ENCODE measurements at regions of chr2 and their contacts with region 1.

Region 1: DNA sequence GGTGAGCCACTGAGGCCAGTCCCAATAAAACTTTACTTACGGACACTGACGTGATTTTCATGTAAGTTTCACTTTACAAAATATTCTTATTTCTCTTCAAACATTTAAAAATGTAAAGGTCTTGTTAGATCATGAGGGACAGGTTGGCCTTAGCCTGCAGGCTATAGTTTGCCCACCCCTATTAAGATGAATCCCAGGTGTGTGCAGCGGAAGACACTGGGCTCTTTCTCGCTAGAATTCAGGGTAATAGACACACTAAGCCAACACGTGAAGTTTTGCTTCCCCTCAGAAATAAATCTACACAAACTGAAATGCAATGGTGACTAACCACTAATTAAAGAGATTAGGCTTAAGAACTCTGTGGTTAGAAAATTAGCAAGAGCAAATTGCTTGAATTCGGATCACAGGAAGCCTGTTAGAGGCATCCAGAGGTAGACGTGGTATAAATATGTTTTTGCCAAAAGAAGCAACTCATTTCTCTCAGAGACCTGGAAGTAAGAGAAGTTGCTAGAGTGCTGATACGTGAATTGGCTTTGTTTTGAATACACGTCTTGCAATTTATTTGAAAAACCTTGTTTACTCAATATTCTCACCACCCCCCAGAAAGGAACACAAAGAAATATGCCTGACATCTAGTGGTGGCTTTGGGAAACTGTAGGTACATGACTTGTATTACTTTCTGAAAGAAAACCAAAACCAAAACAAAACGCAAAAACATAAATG is 151.6 kb downstream of the DTNB start:
- DNase-seq: peak in 7 of 14 experiments; percentile 16 to 87 (median 45)
- ATAC-seq: peak; percentile 100
- H3K4me3 ChIP-seq: peak overlapping the region; percentile 10
- H3K4me3 Mint-ChIP-seq: peak overlapping the region; percentile 3
- H3K27ac ChIP-seq: no peak overlapping the region
- H3K27ac Mint-ChIP-seq: peak overlapping the region; percentile 9
- H3K4me1 ChIP-seq: no peaks in the 10 kb centered on the region
- H3K4me1 Mint-ChIP-seq: peaks cover 7% of the 10 kb centered on the region
- H3K27me3 ChIP-seq: no peaks in the 10 kb centered on the region
- H3K27me3 Mint-ChIP-seq: no peaks in the 10 kb centered on the region
- CTCF ChIP-seq: peak; percentile 80

Region 2: DNA sequence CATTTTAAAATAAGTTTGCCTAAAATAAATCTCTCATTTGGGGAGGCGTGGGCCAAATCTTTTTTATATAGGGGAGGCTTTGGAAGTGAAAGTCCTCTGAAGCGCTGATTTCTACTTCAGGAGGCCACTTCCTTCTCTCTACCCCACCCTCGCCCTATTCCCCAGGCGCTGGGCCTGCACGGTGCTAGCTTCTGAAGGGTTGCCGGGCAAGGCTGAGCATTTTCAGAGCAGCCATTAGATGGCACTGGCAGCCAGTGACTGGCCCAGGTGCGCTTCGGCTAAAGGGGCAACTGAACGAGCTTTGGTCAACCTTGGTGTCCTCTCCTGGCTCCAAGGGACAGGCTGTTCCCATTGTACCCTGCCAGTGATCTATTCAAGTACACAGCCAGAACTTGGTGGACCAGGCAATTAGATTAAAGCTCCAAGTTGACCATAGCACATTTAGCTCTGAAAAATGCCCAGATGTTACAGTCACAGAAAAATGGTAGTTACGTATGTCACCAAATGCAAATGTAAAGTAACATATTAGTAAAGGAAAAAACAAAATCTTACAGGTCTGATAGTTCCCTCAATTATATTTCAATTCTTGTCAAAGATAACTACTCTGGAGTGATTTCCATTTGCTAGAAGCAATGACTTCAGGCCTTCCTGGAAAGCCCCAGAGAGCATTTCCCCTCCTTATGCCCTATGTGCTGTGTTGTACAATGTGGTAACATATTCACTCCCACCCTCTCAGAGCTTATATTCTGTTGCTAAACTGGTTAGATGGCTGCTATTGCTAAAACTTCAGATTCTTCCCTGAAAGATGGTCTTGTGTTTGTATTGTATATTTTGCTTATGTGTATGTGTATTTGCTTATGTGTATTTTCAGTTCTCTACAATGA is 355.6 kb before region 1 on chr2:
- CTCF ChIA-PET with region 1: no interaction called
- POLR2A ChIA-PET with region 1: no interaction called
- intact Hi-C with region 1: loop called in 1 of 2 experiments (anchors 1 kb)
- DNase-seq: peak; percentile 2 to 70 (median 39)
- ATAC-seq: peak; percentile 58
- H3K4me3 ChIP-seq: no peak overlapping the region
- H3K4me3 Mint-ChIP-seq: peak overlapping the region; percentile 60
- H3K27ac ChIP-seq: no peak overlapping the region
- H3K27ac Mint-ChIP-seq: peak overlapping the region; percentile 37
- H3K4me1 ChIP-seq: peaks cover 32% of the 10 kb centered on the region
- H3K4me1 Mint-ChIP-seq: peaks cover 36% of the 10 kb centered on the region
- H3K27me3 ChIP-seq: peaks cover 31 to 37% of the 10 kb centered on the region in 2 experiments
- H3K27me3 Mint-ChIP-seq: peaks cover 49% of the 10 kb centered on the region
- CTCF ChIP-seq: peak; percentile 59

Region 3: GRCh38 chr2:25309402-25309801 is 212.4 kb before region 1 on chr2:
- CTCF ChIA-PET with region 1: no interaction called
- POLR2A ChIA-PET with region 1: no interaction called
- intact Hi-C with region 1: loop called (anchors 1 to 2 kb)
- DNase-seq: peak; percentile 49 to 81 (median 60)
- ATAC-seq: peak; percentile 59
- H3K4me3 ChIP-seq: no peak overlapping the region
- H3K4me3 Mint-ChIP-seq: peak overlapping the region; percentile 25
- H3K27ac ChIP-seq: no peak overlapping the region
- H3K27ac Mint-ChIP-seq: peak overlapping the region; percentile 88
- H3K4me1 ChIP-seq: peaks cover 96% of the 10 kb centered on the region
- H3K4me1 Mint-ChIP-seq: peaks cover 87% of the 10 kb centered on the region
- H3K27me3 ChIP-seq: no peaks in the 10 kb centered on the region
- H3K27me3 Mint-ChIP-seq: no peaks in the 10 kb centered on the region
- CTCF ChIP-seq: peak; percentile 66

Region 4: DNA sequence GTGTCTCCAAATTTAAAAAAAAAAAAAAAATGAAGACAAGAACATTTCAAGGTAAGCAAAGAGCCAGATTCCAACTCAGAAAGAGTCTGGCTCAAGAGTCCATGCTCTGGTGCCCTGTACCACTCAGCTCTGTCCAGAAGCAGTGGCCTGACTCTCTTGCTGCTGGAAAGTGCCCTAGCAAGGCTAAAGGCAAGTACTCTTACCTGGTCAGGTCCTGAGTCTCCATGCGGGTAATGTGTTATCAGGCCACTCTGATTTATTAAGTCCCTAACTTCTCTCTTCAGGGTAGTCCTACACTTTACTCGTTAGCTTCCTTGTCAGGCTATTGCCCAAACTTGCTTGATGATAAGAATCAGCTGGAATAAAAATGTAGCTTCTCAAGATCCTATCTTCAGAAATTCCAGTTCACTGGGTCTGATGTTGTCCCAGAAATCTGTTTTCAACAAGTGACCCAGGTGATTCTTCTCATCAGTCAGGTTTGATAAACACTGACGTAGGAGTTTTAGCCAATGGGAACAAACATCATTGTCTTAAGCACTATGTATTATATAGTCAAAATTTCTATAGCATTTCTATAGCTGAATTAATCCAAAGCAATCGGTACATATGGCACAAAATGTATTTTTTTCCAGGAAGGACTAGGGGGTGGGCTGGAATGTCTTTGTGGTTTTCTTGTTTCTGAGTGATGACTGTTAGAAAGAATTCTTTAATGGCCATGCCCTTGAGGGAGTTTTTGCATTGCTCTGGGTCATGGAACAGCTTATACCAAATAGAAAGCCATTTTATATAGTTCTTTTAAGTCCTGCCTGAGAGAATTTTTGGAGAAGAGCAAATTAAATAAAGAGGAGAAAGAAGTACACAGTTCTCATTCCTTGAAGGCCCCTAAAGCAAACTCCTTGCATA is 40.2 kb before region 1 on chr2:
- CTCF ChIA-PET with region 1: no interaction called
- POLR2A ChIA-PET with region 1: no interaction called
- intact Hi-C with region 1: no loop called
- DNase-seq: no peak
- ATAC-seq: no peak
- H3K4me3 ChIP-seq: no peak overlapping the region
- H3K4me3 Mint-ChIP-seq: no peak overlapping the region
- H3K27ac ChIP-seq: no peak overlapping the region
- H3K27ac Mint-ChIP-seq: no peak overlapping the region
- H3K4me1 ChIP-seq: no peaks in the 10 kb centered on the region
- H3K4me1 Mint-ChIP-seq: no peaks in the 10 kb centered on the region
- H3K27me3 ChIP-seq: no peaks in the 10 kb centered on the region
- H3K27me3 Mint-ChIP-seq: no peaks in the 10 kb centered on the region
- CTCF ChIP-seq: no peak

Measured in CD4-positive, alpha-beta T cell (primary cell).